ENCODE measurements at regions of chr10 and their contacts with region 1.

Region 1: DNA sequence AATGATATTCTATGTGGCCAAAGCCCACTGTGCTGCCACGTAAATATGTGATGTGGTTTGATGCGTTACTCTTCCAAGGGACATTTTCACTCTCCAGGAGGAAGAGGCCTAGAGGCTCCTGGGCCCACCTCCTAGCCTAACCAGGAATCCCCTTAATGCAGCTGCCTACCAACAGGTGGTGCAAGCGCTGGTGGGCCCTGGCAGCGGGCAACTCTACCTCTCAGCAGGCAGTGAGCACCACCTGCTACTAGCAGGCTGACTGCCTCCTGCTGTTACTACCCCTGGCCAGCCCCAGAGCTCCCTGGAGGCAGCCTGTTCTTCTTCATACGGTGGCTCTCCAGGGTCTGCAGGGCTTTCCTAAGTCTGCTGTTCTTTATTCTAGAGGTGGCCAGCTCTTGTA is 62.8 kb downstream of the CDH23 start:
- DNase-seq: no peak
- H3K4me3 ChIP-seq: no peak overlapping the region
- H3K27ac ChIP-seq: no peak overlapping the region
- H3K4me1 ChIP-seq: no peaks in the 10 kb centered on the region
- H3K27me3 ChIP-seq: no peaks in the 10 kb centered on the region
- CTCF ChIP-seq: peak; percentile 38 to 62 (median 40)
- EP300 ChIP-seq: no peak
- POLR2A ChIP-seq: no peak
- RAD21 ChIP-seq: peak; percentile 27 to 45; a peak in 3 of 4 replicates

Region 2: DNA sequence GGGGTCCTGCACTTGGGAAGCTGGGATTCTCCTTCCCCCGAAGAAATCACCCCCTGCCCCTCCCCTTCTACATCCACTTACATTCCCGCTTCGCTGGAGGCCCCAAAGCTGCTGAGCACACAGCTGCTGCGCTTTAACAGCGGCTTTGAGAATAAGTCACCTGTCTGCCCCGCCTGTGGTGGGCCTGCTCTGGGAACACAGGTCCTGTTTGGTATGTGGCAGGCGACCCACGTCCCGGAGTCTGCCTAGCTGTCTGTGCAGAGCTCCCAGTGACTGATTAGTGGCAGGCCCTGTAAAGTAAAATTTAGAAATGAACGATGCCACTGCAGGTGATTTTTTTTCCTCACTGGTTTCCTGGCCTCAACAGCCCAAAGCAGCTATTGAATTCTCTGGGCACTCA is 15.8 kb before region 1 on chr10:
- CTCF ChIA-PET with region 1: interaction called, 15 read pairs
- POLR2A ChIA-PET with region 1: no interaction called
- DNase-seq: no peak
- H3K4me3 ChIP-seq: no peak overlapping the region
- H3K27ac ChIP-seq: no peak overlapping the region
- H3K4me1 ChIP-seq: peaks cover 0 to 5% (median 2%) of the 10 kb centered on the region in 4 experiments; a peak in 5 of 7 replicates
- H3K27me3 ChIP-seq: no peaks in the 10 kb centered on the region
- CTCF ChIP-seq: no peak
- EP300 ChIP-seq: no peak
- POLR2A ChIP-seq: no peak
- RAD21 ChIP-seq: no peak